ENCODE measurements at regions of chr9 and their contacts with region 1.

Region 1: GRCh38 chr9:69385581-69386033 is 60.6 kb downstream of the ENTREP1 start:
- DNase-seq: no peak
- H3K4me3 ChIP-seq: no peak overlapping the region
- H3K27ac ChIP-seq: no peak overlapping the region
- H3K27me3 ChIP-seq: peaks cover 0 to 6% (median 0%) of the 10 kb centered on the region in 45 donors
- CTCF ChIP-seq: no peak

Region 2: GRCh38 chr9:68437785-68438184 is 947.8 kb before region 1 on chr9:
- intact Hi-C with region 1: loop called in 1 of 2 experiments (anchors 10 kb)
- DNase-seq: peak in 2 of 10 donors; percentile 15 to 30
- H3K4me3 ChIP-seq: no peak overlapping the region
- H3K27ac ChIP-seq: no peak overlapping the region
- H3K27me3 ChIP-seq: peaks cover 0 to 3% (median 0%) of the 10 kb centered on the region in 45 donors
- CTCF ChIP-seq: no peak

Region 3: GRCh38 chr9:69397384-69398214 is 12.0 kb after region 1 on chr9:
- intact Hi-C with region 1: no loop called
- DNase-seq: peak in 1 of 10 donors; percentile 23
- H3K4me3 ChIP-seq: peak overlapping the region in 21 of 59 donors; percentile 1 to 38 (median 15)
- H3K27ac ChIP-seq: peak overlapping the region in 45 of 59 donors; percentile 9 to 82 (median 62)
- H3K27me3 ChIP-seq: no peaks in the 10 kb centered on the region
- CTCF ChIP-seq: no peak